ENCODE measurements at regions of chr6 and their contacts with region 1.

Region 1: GRCh38 chr6:13427801-13428582 is 59.4 kb downstream of the GFOD1 start:
- DNase-seq: peak; percentile 78
- ATAC-seq: no peak

Region 2: GRCh38 chr6:13336553-13336952 is 91.4 kb before region 1 on chr6:
- intact Hi-C with region 1: loop called (anchors 10 kb)
- DNase-seq: peak; percentile 85
- ATAC-seq: peak; percentile 76

Region 3: DNA sequence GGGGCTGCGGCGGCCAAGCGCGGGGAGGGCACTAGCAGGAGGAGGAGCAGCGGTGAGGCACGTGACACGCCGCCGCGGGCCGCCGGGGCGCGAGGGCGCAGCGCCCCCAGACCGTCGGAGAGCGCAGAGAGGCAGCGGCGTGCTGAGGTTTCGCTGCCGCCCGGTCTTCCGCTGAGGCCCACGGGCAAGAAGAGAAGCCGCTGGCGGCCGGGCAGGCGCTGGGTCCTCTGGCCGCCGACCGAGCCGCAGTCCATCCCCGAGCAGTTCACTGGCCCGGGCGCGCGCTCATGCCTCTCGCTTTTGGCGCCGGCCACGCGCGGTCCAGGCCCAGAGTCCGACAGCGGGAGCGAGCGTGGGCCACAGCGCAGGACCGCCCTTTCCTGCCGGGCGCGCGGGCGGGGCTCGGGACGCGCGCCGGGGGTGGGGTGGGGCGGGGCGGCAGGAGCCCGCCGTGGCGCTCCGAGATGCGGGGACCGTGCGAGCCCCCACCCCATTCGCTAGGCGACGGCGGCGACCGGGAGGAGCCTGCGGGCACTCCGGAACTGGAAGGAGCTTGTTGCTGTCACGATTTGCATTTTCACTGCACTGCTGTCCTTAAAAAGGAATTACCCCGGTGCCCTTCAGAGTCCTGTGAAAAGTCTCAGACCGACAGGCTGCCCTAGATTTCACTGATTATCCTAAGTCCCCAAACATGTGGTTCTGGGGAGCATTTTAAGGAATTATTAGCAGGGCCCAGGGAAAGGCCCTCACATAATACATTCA is 386.4 kb after region 1 on chr6 and contains the start of gene MCUR1:
- intact Hi-C with region 1: loop called (anchors 10 kb)
- DNase-seq: peak; percentile 96
- ATAC-seq: peak; percentile 97
- total RNA-seq, gene MCUR1: 33.9 TPM

Measured in Right ventricle myocardium inferior (tissue), 1 donor.